Mammary epithelial cell (primary cell): ENCODE measurements at regions of chr3 and their contacts with region 1.

Region 1: DNA sequence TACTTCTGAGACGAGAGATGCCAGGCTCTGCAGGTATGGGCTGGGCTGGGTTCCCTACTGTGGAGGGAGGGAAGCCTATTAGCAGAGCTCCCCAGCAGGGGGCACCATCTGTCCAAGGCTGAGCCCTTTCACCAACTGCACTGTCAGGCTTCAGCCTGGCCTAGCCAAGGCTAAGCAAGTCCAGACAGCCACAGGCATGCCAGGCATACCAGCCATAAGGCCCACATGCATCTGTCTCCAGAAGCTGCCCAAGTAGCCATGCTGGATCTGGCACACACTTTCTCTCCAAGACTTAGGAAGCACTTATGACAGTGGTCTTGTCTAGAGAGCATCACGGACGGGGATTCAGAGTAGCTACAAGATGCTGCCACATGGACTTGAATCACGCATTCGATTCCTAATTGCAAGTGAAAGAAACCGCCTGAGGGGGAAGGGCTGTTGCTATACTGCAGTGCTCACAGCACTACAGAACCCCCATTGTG is 28.3 kb downstream of the RUVBL1 start:
- DNase-seq: peak; percentile 86
- H3K4me3 ChIP-seq: no peak overlapping the region
- H3K27ac ChIP-seq: no peak overlapping the region
- H3K4me1 ChIP-seq: peaks cover 21% of the 10 kb centered on the region
- H3K27me3 ChIP-seq: no peaks in the 10 kb centered on the region
- CTCF ChIP-seq: peak; percentile 90 to 98

Region 2: DNA sequence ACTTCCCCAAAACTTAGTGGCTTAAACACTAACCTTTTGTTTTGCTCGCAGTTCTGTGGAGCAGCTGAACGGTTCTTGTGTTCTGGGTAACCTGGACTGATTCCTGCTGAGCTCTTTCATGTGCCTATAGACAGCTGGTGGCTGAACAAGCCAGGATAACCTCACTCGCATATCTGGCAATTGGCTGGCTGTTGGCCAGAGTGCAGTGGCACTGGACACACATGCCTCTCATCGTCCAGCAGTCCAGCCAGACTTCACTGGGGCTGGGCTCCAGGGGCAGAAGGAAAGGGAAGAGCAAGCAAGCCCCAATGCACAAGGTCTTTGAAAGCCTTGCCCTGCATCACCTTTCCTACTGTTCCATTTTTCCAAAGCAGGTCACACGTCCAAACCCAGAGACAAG is 451.4 kb after region 1 on chr3:
- CTCF ChIA-PET with region 1: no interaction called
- dilution Hi-C with region 1: no loop called
- in situ Hi-C with region 1: no loop called
- intact Hi-C with region 1: no loop called
- DNase-seq: no peak
- H3K4me3 ChIP-seq: no peak overlapping the region
- H3K27ac ChIP-seq: no peak overlapping the region
- H3K4me1 ChIP-seq: peaks cover 14% of the 10 kb centered on the region
- H3K27me3 ChIP-seq: no peaks in the 10 kb centered on the region
- CTCF ChIP-seq: no peak

Region 3: GRCh38 chr3:128572644-128573105 is 477.4 kb after region 1 on chr3:
- CTCF ChIA-PET with region 1: no interaction called
- dilution Hi-C with region 1: loop called (anchors 10 kb)
- in situ Hi-C with region 1: no loop called
- intact Hi-C with region 1: no loop called
- DNase-seq: no peak
- H3K4me3 ChIP-seq: no peak overlapping the region
- H3K27ac ChIP-seq: no peak overlapping the region
- H3K4me1 ChIP-seq: no peaks in the 10 kb centered on the region
- H3K27me3 ChIP-seq: peaks cover 6% of the 10 kb centered on the region
- CTCF ChIP-seq: peak in 1 of 2 donors; percentile 28

Region 4: DNA sequence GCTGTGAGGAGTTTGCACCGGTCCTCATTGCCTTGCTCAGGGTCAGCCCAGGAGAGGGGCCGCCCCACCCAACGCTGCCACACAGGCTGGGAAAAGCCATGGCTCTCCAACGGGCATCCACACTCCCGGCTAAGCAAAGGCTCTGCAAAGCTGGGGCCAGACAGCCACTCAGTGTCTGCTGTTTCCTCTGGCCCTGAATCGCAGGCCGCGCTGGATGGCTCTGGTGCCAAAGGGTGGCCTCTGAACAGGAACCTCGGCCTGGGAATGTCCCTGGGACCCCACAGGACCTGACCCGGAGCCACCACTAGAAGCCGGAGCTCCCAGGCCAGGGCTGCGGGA is 512.4 kb after region 1 on chr3:
- CTCF ChIA-PET with region 1: no interaction called
- dilution Hi-C with region 1: no loop called
- in situ Hi-C with region 1: no loop called
- intact Hi-C with region 1: loop called (anchors 1 kb)
- DNase-seq: no peak
- H3K4me3 ChIP-seq: peak overlapping the region in 2 of 3 experiments; percentile 46 to 60
- H3K27ac ChIP-seq: no peak overlapping the region
- H3K4me1 ChIP-seq: peaks cover 8% of the 10 kb centered on the region
- H3K27me3 ChIP-seq: no peaks in the 10 kb centered on the region
- CTCF ChIP-seq: no peak